ENCODE measurements at regions of chr21 and their contacts with region 1.

Region 1: GRCh38 chr21:43810505-43811261 is 21.3 kb downstream of the RRP1 start:
- DNase-seq: peak; percentile 78 to 84
- H3K4me3 ChIP-seq: no peak overlapping the region
- H3K27ac ChIP-seq: no peak overlapping the region
- H3K4me1 ChIP-seq: peaks cover 0 to 26% (median 13%) of the 10 kb centered on the region in 4 donors
- H3K27me3 ChIP-seq: peaks cover 0 to 10% of the 10 kb centered on the region in 2 donors
- CTCF ChIP-seq: peak; percentile 85 to 91

Region 2: GRCh38 chr21:43976661-43977060 is 166.0 kb after region 1 on chr21:
- intact Hi-C with region 1: loop called (anchors 2 kb)
- DNase-seq: no peak
- H3K4me3 ChIP-seq: no peak overlapping the region
- H3K27ac ChIP-seq: no peak overlapping the region
- H3K4me1 ChIP-seq: no peaks in the 10 kb centered on the region
- H3K27me3 ChIP-seq: no peaks in the 10 kb centered on the region
- CTCF ChIP-seq: no peak

Region 3: DNA sequence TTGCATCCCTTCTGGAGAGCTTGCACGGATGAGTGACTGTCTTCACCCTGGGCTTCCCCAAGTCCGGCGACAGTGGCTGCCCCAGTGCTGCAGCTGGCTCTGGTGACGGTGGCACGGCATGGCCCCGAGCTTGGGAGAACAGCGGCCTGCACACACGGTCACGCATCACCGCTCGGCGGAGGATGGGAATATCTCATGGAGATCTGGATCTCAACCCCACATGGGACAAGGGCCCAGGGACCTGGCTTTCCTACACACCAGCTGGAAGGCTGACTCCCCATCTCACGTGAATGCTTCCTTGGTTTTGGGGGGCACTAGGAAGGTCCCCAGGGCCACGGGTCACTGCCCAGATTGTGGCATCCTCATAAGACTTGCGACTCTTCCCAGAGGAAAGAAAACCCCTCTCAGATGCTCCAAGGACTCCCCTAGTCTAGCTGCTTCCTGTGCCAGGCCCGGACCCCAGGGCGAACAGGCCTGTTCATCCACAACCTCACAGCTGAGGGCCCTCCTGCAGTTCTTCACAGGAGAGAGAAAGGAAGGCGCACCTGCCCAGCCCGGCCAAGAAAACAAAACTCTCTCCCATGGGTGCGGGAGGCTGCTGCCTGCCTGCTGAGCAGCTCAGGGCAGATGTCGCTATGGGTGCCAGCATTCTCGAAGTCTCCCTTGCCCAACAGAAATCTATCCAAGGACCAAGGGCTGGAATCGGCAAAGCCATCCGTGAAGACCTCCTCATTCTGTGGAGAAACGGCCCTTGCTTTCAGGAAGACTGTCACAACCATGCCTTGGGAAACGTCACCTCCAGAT is 518.6 kb after region 1 on chr21:
- intact Hi-C with region 1: loop called (anchors 10 kb)
- DNase-seq: no peak
- H3K4me3 ChIP-seq: no peak overlapping the region
- H3K27ac ChIP-seq: no peak overlapping the region
- H3K4me1 ChIP-seq: no peaks in the 10 kb centered on the region
- H3K27me3 ChIP-seq: no peaks in the 10 kb centered on the region
- CTCF ChIP-seq: no peak